ENCODE measurements at regions of chr2 and their contacts with region 1.

Region 1: GRCh38 chr2:53202063-53202462 is 565.5 kb upstream of the CHAC2 start:
- DNase-seq: peak; percentile 44 to 64
- H3K4me3 ChIP-seq: no peak overlapping the region
- H3K4me3 Mint-ChIP-seq: no peak overlapping the region
- H3K27ac Mint-ChIP-seq: no peak overlapping the region
- H3K4me1 ChIP-seq: no peaks in the 10 kb centered on the region
- H3K4me1 Mint-ChIP-seq: no peaks in the 10 kb centered on the region
- H3K27me3 ChIP-seq: no peaks in the 10 kb centered on the region
- H3K27me3 Mint-ChIP-seq: no peaks in the 10 kb centered on the region
- CTCF ChIP-seq: peak in 1 of 2 experiments; percentile 24

Region 2: DNA sequence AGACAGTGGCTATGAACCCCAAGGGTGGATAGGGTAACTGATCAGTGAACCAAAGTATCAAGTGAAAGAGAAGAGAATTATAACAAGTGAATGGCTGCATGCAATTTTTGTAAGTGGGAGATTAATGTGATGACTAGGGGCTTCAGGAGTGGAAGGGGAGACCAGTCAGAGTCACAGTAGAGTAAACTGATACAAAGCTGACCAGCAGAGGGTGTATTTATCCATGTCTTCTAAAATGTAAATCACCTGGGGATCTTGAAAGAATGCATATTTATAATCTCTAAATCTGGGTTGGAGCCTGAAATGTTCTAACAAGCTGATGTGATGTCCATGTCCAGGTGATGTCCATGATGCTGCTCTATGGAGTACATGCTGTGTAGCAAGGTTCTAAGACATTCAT is 785.7 kb before region 1 on chr2:
- CTCF ChIA-PET with region 1: no interaction called
- POLR2A ChIA-PET with region 1: no interaction called
- intact Hi-C with region 1: loop called (anchors 1 kb)
- DNase-seq: peak in 1 of 2 experiments; percentile 18
- H3K4me3 ChIP-seq: no peak overlapping the region
- H3K4me3 Mint-ChIP-seq: no peak overlapping the region
- H3K27ac Mint-ChIP-seq: no peak overlapping the region
- H3K4me1 ChIP-seq: no peaks in the 10 kb centered on the region
- H3K4me1 Mint-ChIP-seq: no peaks in the 10 kb centered on the region
- H3K27me3 ChIP-seq: no peaks in the 10 kb centered on the region
- H3K27me3 Mint-ChIP-seq: no peaks in the 10 kb centered on the region
- CTCF ChIP-seq: peak; percentile 35 to 41

Region 3: DNA sequence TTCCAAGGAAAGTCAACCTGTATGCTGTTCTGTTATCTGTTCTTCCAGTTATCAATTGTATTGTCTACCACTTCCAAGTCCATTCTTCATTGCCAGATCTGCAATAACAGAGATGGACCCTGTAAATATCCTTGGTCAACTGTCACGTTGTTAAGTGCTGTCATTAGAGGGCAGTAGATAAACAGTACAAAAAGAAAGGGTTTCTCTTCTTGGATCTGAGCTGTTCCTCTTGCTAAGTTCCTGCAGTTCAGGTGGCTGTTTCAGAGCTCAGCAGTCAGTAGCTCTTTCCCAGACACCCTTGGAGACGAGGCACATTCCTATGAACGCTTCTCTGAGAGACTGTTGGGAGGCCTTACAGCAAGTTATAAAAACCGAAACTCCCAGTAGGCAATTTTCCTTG is 391.6 kb before region 1 on chr2:
- CTCF ChIA-PET with region 1: interaction called, 6 read pairs
- POLR2A ChIA-PET with region 1: no interaction called
- intact Hi-C with region 1: loop called (anchors 1 kb)
- DNase-seq: peak in 1 of 2 experiments; percentile 4
- H3K4me3 ChIP-seq: no peak overlapping the region
- H3K4me3 Mint-ChIP-seq: no peak overlapping the region
- H3K27ac Mint-ChIP-seq: no peak overlapping the region
- H3K4me1 ChIP-seq: no peaks in the 10 kb centered on the region
- H3K4me1 Mint-ChIP-seq: no peaks in the 10 kb centered on the region
- H3K27me3 ChIP-seq: no peaks in the 10 kb centered on the region
- H3K27me3 Mint-ChIP-seq: no peaks in the 10 kb centered on the region
- CTCF ChIP-seq: peak; percentile 31 to 45

Region 4: GRCh38 chr2:52919673-52920072 is 282.4 kb before region 1 on chr2:
- CTCF ChIA-PET with region 1: no interaction called
- POLR2A ChIA-PET with region 1: no interaction called
- intact Hi-C with region 1: no loop called
- DNase-seq: no peak
- H3K4me3 ChIP-seq: no peak overlapping the region
- H3K4me3 Mint-ChIP-seq: no peak overlapping the region
- H3K27ac Mint-ChIP-seq: no peak overlapping the region
- H3K4me1 ChIP-seq: no peaks in the 10 kb centered on the region
- H3K4me1 Mint-ChIP-seq: no peaks in the 10 kb centered on the region
- H3K27me3 ChIP-seq: no peaks in the 10 kb centered on the region
- H3K27me3 Mint-ChIP-seq: peaks cover 2% of the 10 kb centered on the region
- CTCF ChIP-seq: no peak

Region 5: GRCh38 chr2:52976253-52976949 is 225.7 kb before region 1 on chr2:
- CTCF ChIA-PET with region 1: no interaction called
- POLR2A ChIA-PET with region 1: no interaction called
- intact Hi-C with region 1: loop called (anchors 1 kb)
- DNase-seq: peak; percentile 37 to 52
- H3K4me3 ChIP-seq: no peak overlapping the region
- H3K4me3 Mint-ChIP-seq: no peak overlapping the region
- H3K27ac Mint-ChIP-seq: no peak overlapping the region
- H3K4me1 ChIP-seq: no peaks in the 10 kb centered on the region
- H3K4me1 Mint-ChIP-seq: no peaks in the 10 kb centered on the region
- H3K27me3 ChIP-seq: no peaks in the 10 kb centered on the region
- H3K27me3 Mint-ChIP-seq: peaks cover 4% of the 10 kb centered on the region
- CTCF ChIP-seq: peak; percentile 44 to 57

Region 6: GRCh38 chr2:53018825-53019425 is 183.1 kb before region 1 on chr2:
- CTCF ChIA-PET with region 1: interaction called, 6 read pairs
- POLR2A ChIA-PET with region 1: no interaction called
- intact Hi-C with region 1: loop called (anchors 1 kb)
- DNase-seq: no peak
- H3K4me3 ChIP-seq: no peak overlapping the region
- H3K4me3 Mint-ChIP-seq: no peak overlapping the region
- H3K27ac Mint-ChIP-seq: no peak overlapping the region
- H3K4me1 ChIP-seq: no peaks in the 10 kb centered on the region
- H3K4me1 Mint-ChIP-seq: no peaks in the 10 kb centered on the region
- H3K27me3 ChIP-seq: no peaks in the 10 kb centered on the region
- H3K27me3 Mint-ChIP-seq: no peaks in the 10 kb centered on the region
- CTCF ChIP-seq: peak; percentile 13 to 25

Region 7: GRCh38 chr2:53259395-53260009 is 57.4 kb after region 1 on chr2:
- CTCF ChIA-PET with region 1: no interaction called
- POLR2A ChIA-PET with region 1: no interaction called
- intact Hi-C with region 1: no loop called
- DNase-seq: no peak
- H3K4me3 ChIP-seq: no peak overlapping the region
- H3K4me3 Mint-ChIP-seq: no peak overlapping the region
- H3K27ac Mint-ChIP-seq: no peak overlapping the region
- H3K4me1 ChIP-seq: no peaks in the 10 kb centered on the region
- H3K4me1 Mint-ChIP-seq: no peaks in the 10 kb centered on the region
- H3K27me3 ChIP-seq: no peaks in the 10 kb centered on the region
- H3K27me3 Mint-ChIP-seq: no peaks in the 10 kb centered on the region
- CTCF ChIP-seq: no peak